ENCODE measurements at regions of chr12 and their contacts with region 1.

Region 1: GRCh38 chr12:120265473-120266179 is at the start of gene PXN:
- DNase-seq: peak in 1 of 2 donors; percentile 93
- H3K4me3 ChIP-seq: peak within 1 kb of the TSS; percentile 97 to 98
- H3K27ac ChIP-seq: peak within 1 kb of the TSS; percentile 90 to 95
- H3K4me1 ChIP-seq: peaks cover 5 to 17% of the 10 kb centered on the region in 2 donors
- H3K27me3 ChIP-seq: no peaks in the 10 kb centered on the region
- CTCF ChIP-seq: peak; percentile 59 to 89 (median 77)
- total RNA-seq, gene PXN: 282 TPM

Region 2: GRCh38 chr12:120228291-120229070 is 37.1 kb before region 1 on chr12:
- intact Hi-C with region 1: loop called (anchors 1 kb)
- DNase-seq: peak; percentile 57 to 90
- H3K4me3 ChIP-seq: peak overlapping the region in 1 of 2 donors; percentile 44
- H3K27ac ChIP-seq: peak overlapping the region; percentile 89 to 90
- H3K4me1 ChIP-seq: peaks cover 48 to 74% of the 10 kb centered on the region in 2 donors
- H3K27me3 ChIP-seq: no peaks in the 10 kb centered on the region
- CTCF ChIP-seq: peak; percentile 91 to 97 (median 95)

Region 3: GRCh38 chr12:120234643-120235368 is 30.8 kb before region 1 on chr12:
- intact Hi-C with region 1: loop called (anchors 1 kb)
- DNase-seq: peak; percentile 86 to 95
- H3K4me3 ChIP-seq: peak overlapping the region in 1 of 2 donors; percentile 12
- H3K27ac ChIP-seq: peak overlapping the region; percentile 89 to 90
- H3K4me1 ChIP-seq: peaks cover 57 to 92% of the 10 kb centered on the region in 2 donors
- H3K27me3 ChIP-seq: no peaks in the 10 kb centered on the region
- CTCF ChIP-seq: peak in 2 of 3 experiments; percentile 38 to 52

Region 4: DNA sequence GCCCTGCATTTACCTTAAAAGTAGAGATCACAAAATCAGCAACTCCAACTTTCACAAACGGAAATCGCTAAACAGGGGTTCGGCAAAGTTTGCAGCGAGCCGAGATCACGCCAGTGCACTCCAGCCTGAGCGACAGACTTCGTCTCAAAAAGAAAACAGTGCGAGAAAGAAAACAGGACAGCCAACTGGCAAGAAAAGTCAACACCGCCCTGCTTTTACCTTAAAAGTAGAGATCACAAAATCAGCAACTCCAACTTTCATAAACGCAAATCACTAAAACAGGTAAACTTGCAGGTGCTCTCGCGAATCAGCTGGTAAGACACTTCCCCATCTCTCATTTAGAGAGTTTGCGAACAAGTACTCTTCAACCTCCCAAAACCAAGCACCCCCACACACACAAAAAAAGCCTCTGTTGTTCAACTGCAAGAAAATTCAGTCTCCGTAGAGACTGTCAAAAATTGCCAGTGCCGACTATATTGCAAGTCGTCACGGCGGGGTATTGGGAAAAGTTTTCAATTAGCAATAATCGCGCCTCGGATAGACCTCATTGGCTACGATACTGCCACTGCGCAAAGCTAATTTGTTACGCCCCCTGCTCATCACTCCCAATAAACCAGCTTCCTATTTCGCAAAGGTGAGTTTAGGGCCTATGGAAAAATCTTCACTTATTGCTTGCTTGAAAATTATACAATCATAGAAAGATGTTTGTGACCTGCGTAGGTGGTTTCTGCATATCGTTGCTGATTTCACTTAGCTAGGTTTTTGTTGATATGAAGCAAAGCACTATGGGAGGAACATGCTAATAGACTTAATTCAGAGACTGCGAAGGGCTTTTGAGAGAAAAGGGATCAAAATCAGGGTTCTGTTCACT is 27.3 kb after region 1 on chr12 and contains the start of gene RNU4-1:
- intact Hi-C with region 1: loop called (anchors 1 kb)
- DNase-seq: peak in 1 of 2 donors; percentile 87
- H3K4me3 ChIP-seq: peak within 1 kb of the TSS; percentile 57 to 62
- H3K27ac ChIP-seq: peak within 1 kb of the TSS; percentile 92 to 97
- H3K4me1 ChIP-seq: peaks cover 0 to 7% of the 10 kb centered on the region in 2 donors
- H3K27me3 ChIP-seq: no peaks in the 10 kb centered on the region
- CTCF ChIP-seq: no peak
- total RNA-seq, gene RNU4-1: not detected

Region 5: GRCh38 chr12:120437754-120438494 is 172.3 kb after region 1 on chr12 and contains the start of gene COX6A1:
- intact Hi-C with region 1: no loop called
- DNase-seq: peak; percentile 66 to 96
- H3K4me3 ChIP-seq: peak within 1 kb of the TSS; percentile 68 to 84
- H3K27ac ChIP-seq: peak within 1 kb of the TSS; percentile 72 to 77
- H3K4me1 ChIP-seq: peaks cover 0 to 15% of the 10 kb centered on the region in 2 donors
- H3K27me3 ChIP-seq: no peaks in the 10 kb centered on the region
- CTCF ChIP-seq: no peak
- total RNA-seq, gene COX6A1: 686 TPM

Region 6: DNA sequence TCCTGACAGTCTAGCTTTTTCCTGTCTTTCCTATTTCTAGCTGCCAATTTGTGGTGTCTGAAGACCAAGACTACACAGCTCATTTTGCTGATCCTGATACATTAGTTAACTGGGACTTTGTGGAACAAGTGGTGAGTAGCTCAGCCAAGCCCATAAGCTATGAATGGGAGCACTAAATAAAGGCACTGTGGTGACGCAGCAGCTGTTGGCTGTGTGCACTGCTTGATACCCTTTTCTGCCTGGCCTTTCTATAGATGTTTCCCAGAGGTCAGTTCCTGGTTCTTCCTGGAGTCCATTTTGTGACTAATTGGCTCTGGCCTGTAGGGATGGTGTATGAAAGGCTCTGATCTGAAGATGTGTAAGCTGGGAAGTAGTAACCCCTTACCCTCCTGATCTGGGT is 289.1 kb after region 1 on chr12:
- intact Hi-C with region 1: no loop called
- DNase-seq: peak in 1 of 2 donors; percentile 30
- H3K4me3 ChIP-seq: no peak overlapping the region
- H3K27ac ChIP-seq: no peak overlapping the region
- H3K4me1 ChIP-seq: peaks cover 2 to 5% of the 10 kb centered on the region in 2 donors
- H3K27me3 ChIP-seq: no peaks in the 10 kb centered on the region
- CTCF ChIP-seq: no peak

Measured in ascending aorta (tissue), 2 donors.